AG04449 (cell line): ENCODE measurements at regions of chr3 and their contacts with region 1.

Region 1: GRCh38 chr3:4712143-4712542 is 219.0 kb downstream of the ITPR1 start:
- DNase-seq: no peak
- H3K4me3 ChIP-seq: no peak overlapping the region
- CTCF ChIP-seq: no peak

Region 2: DNA sequence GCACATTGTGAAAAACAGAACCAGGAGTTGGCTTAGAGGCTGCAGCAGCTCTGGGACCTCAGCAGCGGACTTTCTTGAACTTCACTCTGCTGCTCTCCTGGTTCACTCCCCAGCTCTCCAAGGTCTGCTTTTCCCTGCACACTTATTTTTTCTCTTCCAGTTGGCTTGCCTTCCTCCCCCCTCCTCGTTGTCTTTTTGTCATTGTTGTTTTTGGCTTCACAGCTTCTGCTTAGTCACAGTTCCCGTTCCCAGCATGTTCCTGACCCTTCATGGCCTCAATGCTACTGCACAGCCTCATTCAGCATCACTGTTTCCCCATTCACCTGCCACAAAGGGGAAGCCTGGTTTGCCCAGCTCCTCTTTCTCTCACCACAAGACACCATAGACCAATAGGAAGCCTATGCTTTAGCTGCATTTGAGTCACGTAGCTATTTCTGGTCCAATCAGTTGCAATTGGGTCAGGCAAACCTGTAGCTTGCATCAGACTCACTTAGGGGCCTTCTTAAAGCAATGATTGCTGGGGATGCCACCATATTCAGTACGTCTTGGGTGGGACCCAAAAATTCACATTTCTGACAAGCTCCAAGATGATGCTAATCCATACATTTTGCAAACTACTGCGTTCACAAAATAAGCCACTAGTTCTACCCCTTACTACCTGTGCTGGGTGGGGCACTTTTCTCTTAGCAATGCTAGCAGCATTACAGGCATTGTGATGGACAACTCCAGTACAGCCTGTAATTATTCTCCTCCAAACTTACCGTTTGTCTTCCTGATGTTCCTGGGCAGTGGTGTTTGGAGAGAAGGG is 237.3 kb before region 1 on chr3:
- CTCF ChIA-PET with region 1: no interaction called
- POLR2A ChIA-PET with region 1: no interaction called
- DNase-seq: no peak
- H3K4me3 ChIP-seq: no peak overlapping the region
- CTCF ChIP-seq: no peak

Region 3: GRCh38 chr3:4674216-4674615 is 37.9 kb before region 1 on chr3:
- CTCF ChIA-PET with region 1: interaction called, 17 read pairs
- POLR2A ChIA-PET with region 1: no interaction called
- DNase-seq: no peak
- H3K4me3 ChIP-seq: no peak overlapping the region
- CTCF ChIP-seq: no peak

Region 4: GRCh38 chr3:4729061-4729973 is 17.2 kb after region 1 on chr3:
- CTCF ChIA-PET with region 1: interaction called, 14 read pairs
- POLR2A ChIA-PET with region 1: no interaction called
- DNase-seq: no peak
- H3K4me3 ChIP-seq: no peak overlapping the region
- CTCF ChIP-seq: no peak

Region 5: DNA sequence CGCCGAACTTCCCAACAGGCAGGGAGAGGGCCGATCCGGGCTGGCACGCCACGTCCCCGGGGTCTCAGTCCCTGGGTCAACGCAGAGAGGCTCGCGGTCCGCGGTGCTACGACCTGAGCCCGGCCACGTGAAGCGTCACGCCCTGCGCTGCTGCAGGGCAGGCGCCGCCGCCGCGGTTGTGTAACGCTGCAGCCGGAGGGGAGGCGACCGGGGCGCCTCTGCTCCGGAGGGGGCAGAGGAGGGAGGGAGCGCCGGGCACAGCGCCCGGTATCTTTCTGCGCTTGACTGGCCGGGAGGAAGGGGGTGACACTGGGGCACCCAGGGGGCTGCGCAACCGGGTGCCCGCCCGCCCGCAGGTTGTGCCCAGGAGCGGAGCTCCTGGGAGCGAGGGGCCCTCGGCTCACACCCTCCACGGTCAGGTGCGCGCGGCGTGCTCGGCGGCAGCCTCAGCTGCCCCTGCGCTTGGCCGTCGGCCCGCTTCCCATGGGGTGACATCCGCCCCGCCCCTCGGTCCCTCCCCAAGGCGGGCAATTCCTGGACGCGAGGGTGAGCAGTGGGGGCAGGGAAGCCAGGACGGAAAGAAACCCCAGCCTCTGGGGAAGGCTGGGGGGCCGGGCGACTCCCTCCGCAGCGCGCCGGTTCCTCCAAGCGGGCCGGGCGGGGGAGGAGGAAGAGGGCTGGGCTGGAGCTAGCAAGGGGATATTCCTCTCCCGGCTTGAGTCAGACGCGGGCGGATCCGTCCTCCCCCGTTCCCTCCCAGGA is 266.2 kb after region 1 on chr3:
- CTCF ChIA-PET with region 1: interaction called, 411 read pairs
- POLR2A ChIA-PET with region 1: interaction called, 13 read pairs
- DNase-seq: peak; percentile 94
- H3K4me3 ChIP-seq: peak overlapping the region; percentile 99
- CTCF ChIP-seq: no peak

Region 6: GRCh38 chr3:5035692-5036391 is 323.7 kb after region 1 on chr3:
- CTCF ChIA-PET with region 1: interaction called, 20 read pairs
- POLR2A ChIA-PET with region 1: interaction called, 3 read pairs
- DNase-seq: no peak
- H3K4me3 ChIP-seq: no peak overlapping the region
- CTCF ChIP-seq: no peak

Region 7: GRCh38 chr3:5063724-5064123 is 351.6 kb after region 1 on chr3:
- CTCF ChIA-PET with region 1: interaction called, 416 read pairs
- POLR2A ChIA-PET with region 1: no interaction called
- DNase-seq: no peak
- H3K4me3 ChIP-seq: no peak overlapping the region
- CTCF ChIP-seq: no peak